Gastrocnemius medialis (tissue), 4 donors: ENCODE measurements at regions of chr4 and their contacts with region 1.

Region 1: GRCh38 chr4:35201403-35201802 is 1042.9 kb downstream of the ARAP2 start:
- DNase-seq: no peak
- ATAC-seq: no peak
- H3K4me3 ChIP-seq: no peak overlapping the region
- H3K27ac ChIP-seq: no peak overlapping the region
- H3K4me1 ChIP-seq: no peaks in the 10 kb centered on the region
- H3K27me3 ChIP-seq: no peaks in the 10 kb centered on the region
- CTCF ChIP-seq: no peak
- POLR2A ChIP-seq: no peak

Region 2: DNA sequence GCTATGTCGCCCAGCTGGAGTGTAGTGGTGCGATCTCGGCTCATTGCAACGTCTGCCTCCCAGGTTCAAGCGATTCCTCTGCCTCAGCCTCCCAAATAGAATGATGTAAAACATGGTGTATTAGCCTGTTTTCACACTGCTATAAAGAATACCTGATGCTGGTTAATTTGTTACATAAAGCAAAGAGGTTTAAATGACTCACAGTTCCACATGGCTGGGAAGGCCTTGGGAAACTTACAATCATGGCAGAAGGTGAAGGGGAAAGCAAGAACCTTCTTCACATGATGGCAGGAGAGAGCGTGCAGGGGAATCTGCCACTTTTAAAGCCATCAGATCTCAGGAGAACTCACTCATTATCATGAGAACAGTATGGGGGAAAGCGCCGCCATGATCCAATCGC is 148.9 kb before region 1 on chr4:
- in situ Hi-C with region 1: no loop called
- intact Hi-C with region 1: no loop called
- DNase-seq: no peak
- ATAC-seq: no peak
- H3K4me3 ChIP-seq: no peak overlapping the region
- H3K27ac ChIP-seq: no peak overlapping the region
- H3K4me1 ChIP-seq: no peaks in the 10 kb centered on the region
- H3K27me3 ChIP-seq: no peaks in the 10 kb centered on the region
- CTCF ChIP-seq: no peak
- POLR2A ChIP-seq: no peak

Region 3: GRCh38 chr4:35300996-35301774 is 99.8 kb after region 1 on chr4:
- in situ Hi-C with region 1: loop called in 1 of 4 experiments (anchors 25 kb)
- intact Hi-C with region 1: no loop called
- DNase-seq: no peak
- ATAC-seq: no peak
- H3K4me3 ChIP-seq: no peak overlapping the region
- H3K27ac ChIP-seq: no peak overlapping the region
- H3K4me1 ChIP-seq: no peaks in the 10 kb centered on the region
- H3K27me3 ChIP-seq: no peaks in the 10 kb centered on the region
- CTCF ChIP-seq: no peak
- POLR2A ChIP-seq: no peak